BJ (cell line): ENCODE measurements at regions of chr20 and their contacts with region 1.

Region 1: DNA sequence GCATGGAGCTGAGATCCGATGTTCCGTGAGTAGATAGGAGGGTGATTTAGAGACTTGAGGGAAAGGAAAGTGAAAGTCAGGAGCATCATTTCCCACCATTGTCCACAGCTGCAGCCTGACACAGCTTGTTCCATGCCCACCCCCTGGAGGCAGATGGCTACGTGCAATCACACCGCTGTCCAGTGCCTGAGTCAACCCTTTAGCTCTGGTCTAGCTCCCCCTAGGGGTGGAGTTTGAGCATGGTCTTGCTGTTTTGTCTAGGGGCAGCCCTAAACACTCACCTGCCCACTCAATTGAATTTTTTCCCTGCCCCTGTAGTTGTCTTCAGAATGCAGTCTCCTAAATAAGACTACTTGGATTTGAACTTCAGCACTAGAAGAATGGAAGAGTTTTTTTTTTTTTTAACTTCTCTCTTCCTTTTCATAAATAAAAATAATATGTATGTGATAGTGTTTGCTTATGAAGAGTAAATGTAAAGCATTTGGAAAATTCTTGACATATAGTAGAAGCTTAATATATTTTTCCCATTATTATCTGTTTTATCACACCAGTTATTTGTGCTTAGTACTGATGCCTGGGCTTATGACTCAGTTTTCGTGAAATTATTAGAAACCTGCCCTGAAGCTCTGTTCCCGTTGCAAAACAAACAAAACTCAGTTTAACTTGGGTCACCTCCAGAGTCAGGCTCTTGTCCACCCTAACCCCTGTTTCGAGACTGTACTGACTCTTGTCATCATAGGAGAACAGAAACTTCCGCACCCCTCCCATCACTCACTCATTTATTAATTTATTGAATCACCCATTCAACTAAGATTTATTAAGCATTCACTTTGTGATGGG is 814.8 kb downstream of the MAFB start:
- DNase-seq: no peak
- H3K4me3 ChIP-seq: no peak overlapping the region
- H3K27me3 ChIP-seq: no peaks in the 10 kb centered on the region
- CTCF ChIP-seq: peak; percentile 92

Region 2: GRCh38 chr20:39676857-39677391 is 197.3 kb before region 1 on chr20:
- CTCF ChIA-PET with region 1: interaction called, 20 read pairs
- POLR2A ChIA-PET with region 1: no interaction called
- DNase-seq: no peak
- H3K4me3 ChIP-seq: no peak overlapping the region
- H3K27me3 ChIP-seq: no peaks in the 10 kb centered on the region; the same call in 1 of the 2 replicates
- CTCF ChIP-seq: peak; percentile 45; the same call in 1 of the 2 replicates

Region 3: GRCh38 chr20:39736434-39737327 is 137.6 kb before region 1 on chr20:
- CTCF ChIA-PET with region 1: no interaction called
- POLR2A ChIA-PET with region 1: no interaction called
- DNase-seq: no peak
- H3K4me3 ChIP-seq: no peak overlapping the region
- H3K27me3 ChIP-seq: no peaks in the 10 kb centered on the region
- CTCF ChIP-seq: no peak

Region 4: DNA sequence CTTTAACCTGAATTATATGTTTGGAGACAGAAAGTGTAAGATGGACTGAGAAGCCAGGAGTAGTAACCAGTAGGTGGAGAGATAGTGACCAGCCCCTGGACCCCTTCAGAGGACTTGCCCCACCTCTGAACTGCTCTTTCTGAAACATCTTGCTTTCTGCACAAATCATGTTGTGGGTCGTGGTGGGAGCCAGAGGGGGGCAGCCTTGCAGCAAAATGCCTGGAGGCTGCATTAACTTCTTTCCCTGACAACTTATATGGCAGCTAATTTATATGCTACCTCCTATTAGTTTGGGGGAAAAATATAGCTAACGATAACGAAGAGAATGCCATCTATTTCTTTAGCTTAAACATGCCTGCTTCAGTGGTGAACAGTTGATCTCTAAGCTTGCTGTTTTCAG is 45.0 kb before region 1 on chr20:
- CTCF ChIA-PET with region 1: interaction called, 54 read pairs
- POLR2A ChIA-PET with region 1: no interaction called
- DNase-seq: no peak
- H3K4me3 ChIP-seq: no peak overlapping the region
- H3K27me3 ChIP-seq: peaks cover 5% of the 10 kb centered on the region
- CTCF ChIP-seq: peak; percentile 55

Region 5: DNA sequence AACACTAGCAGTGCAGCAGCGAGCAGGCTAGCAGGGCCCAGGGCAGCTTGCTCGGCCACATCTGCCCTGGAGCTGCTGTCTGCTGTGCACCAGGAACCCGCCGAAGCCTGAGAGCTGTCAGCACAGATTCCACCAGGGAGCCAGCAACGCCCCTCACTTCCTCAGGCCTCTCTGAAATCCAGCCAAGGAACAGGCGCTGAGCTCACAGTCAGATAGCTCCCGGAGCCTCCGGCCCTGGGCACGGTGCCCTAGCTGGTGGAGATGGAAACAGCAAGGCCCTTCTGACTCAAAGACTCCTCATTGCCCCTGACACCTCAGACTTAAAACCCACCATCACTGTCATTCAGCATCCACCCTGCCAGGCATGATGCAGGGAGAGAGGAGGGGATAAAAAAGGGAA is 24.6 kb before region 1 on chr20:
- CTCF ChIA-PET with region 1: interaction called, 36 read pairs
- POLR2A ChIA-PET with region 1: interaction called, 3 read pairs
- DNase-seq: peak; percentile 78
- H3K4me3 ChIP-seq: no peak overlapping the region
- H3K27me3 ChIP-seq: no peaks in the 10 kb centered on the region; the same call in 1 of the 2 replicates
- CTCF ChIP-seq: no peak

Region 6: GRCh38 chr20:39861381-39861780 is 12.9 kb before region 1 on chr20:
- CTCF ChIA-PET with region 1: interaction called, 17 read pairs
- POLR2A ChIA-PET with region 1: no interaction called
- DNase-seq: no peak
- H3K4me3 ChIP-seq: no peak overlapping the region
- H3K27me3 ChIP-seq: no peaks in the 10 kb centered on the region
- CTCF ChIP-seq: no peak

Region 7: DNA sequence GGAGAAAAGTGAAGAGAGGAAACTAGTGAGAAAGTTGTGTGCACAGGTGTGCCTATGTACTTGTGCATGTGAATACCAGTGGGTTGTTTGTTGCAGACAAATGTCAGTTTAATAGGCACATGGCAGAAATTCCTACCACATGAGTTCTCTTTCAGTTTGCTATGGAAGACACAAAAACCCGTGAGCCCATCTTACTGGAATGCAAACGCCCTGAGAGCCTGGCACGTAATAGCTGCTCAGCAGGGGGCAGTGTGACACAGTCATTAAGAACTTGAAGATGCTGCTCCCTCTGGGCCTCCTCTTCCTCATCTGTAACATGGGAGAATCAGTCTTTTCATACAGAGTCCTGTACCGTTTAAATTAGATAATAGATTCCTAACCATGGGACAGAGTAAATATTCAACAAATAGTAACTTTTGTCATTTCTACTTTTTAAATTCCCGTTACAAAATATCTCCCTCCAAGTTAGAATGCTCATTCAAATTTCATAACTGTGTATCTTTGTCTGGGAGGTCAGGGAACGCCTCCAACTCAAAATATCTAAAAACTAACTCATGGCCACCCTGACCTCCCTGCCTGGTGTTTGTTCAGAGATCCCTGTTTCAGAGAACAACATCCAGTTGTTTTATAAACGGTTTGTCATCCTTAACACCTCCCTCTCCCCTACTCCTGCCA is 11.8 kb after region 1 on chr20:
- CTCF ChIA-PET with region 1: interaction called, 20 read pairs
- POLR2A ChIA-PET with region 1: no interaction called
- DNase-seq: peak; percentile 75
- H3K4me3 ChIP-seq: no peak overlapping the region
- H3K27me3 ChIP-seq: no peaks in the 10 kb centered on the region
- CTCF ChIP-seq: peak; percentile 44; the same call in 1 of the 2 replicates

Region 8: GRCh38 chr20:39909447-39909846 is 35.2 kb after region 1 on chr20:
- CTCF ChIA-PET with region 1: no interaction called
- POLR2A ChIA-PET with region 1: no interaction called
- DNase-seq: no peak
- H3K4me3 ChIP-seq: no peak overlapping the region
- H3K27me3 ChIP-seq: no peaks in the 10 kb centered on the region; the same call in none of the 2 replicates
- CTCF ChIP-seq: no peak